GM12878 (cell line): ENCODE measurements at regions of chr17 and their contacts with region 1.

Region 1: DNA sequence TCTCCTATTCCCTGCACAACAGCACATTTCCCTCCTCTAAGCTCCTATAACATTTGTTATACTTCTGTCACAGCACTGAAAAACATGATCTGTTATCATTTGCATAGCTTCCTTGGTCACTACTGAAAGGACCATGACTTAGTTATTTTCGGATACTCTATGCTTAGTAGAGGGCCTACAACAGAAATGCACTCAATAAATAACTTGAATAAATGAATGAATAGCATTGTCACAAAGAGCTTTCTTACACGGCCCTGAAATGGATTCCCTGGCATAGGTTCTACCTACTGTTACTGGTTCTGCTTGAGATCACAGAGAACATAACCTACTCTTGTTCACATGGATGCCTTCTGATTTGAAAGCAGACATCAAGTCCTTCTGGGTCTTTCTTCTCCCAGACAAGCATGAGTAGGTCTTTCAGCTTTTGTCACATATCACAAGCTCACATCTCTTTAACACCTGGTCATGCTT is 41.6 kb downstream of the MYO1D start:
- DNase-seq: peak; percentile 70
- ATAC-seq: peak; percentile 84
- H3K4me3 ChIP-seq: peak overlapping the region; percentile 60
- H3K27ac ChIP-seq: peak overlapping the region; percentile 95
- H3K4me1 ChIP-seq: peaks cover 41% of the 10 kb centered on the region
- H3K27me3 ChIP-seq: no peaks in the 10 kb centered on the region
- CTCF ChIP-seq: no peak
- EP300 ChIP-seq: 0 out of 4 replicates have a peak, but pooled peaks of 1 of the 2 experiments have one; percentile 10
- POLR2A ChIP-seq: no peak
- RAD21 ChIP-seq: no peak

Region 2: GRCh38 chr17:32846143-32846542 is 10.8 kb after region 1 on chr17:
- CTCF ChIA-PET with region 1: interaction called, 5 read pairs
- POLR2A ChIA-PET with region 1: interaction called, 5 read pairs
- RAD21 ChIA-PET with region 1: interaction called, 4 read pairs
- SMC1A ChIA-PET with region 1: interaction called, 11 read pairs
- in situ Hi-C with region 1: no loop called
- intact Hi-C with region 1: no loop called
- DNase-seq: no peak
- ATAC-seq: no peak
- H3K4me3 ChIP-seq: no peak overlapping the region
- H3K27ac ChIP-seq: no peak overlapping the region
- H3K4me1 ChIP-seq: no peaks in the 10 kb centered on the region
- H3K27me3 ChIP-seq: no peaks in the 10 kb centered on the region
- CTCF ChIP-seq: no peak
- EP300 ChIP-seq: no peak
- POLR2A ChIP-seq: no peak
- RAD21 ChIP-seq: no peak